ENCODE measurements at regions of chr15 and their contacts with region 1.

Region 1: GRCh38 chr15:65286704-65287519 is at the start of gene PARP16:
- DNase-seq: peak; percentile 80 to 97 (median 92)
- ATAC-seq: peak; percentile 94
- H3K4me3 ChIP-seq: peak within 1 kb of the TSS; percentile 71 to 88
- H3K4me3 Mint-ChIP-seq: peak within 1 kb of the TSS; percentile 90
- H3K27ac ChIP-seq: peak within 1 kb of the TSS; percentile 69 to 81
- H3K27ac Mint-ChIP-seq: peak within 1 kb of the TSS; percentile 86
- H3K4me1 ChIP-seq: peaks cover 27% of the 10 kb centered on the region
- H3K4me1 Mint-ChIP-seq: peaks cover 45% of the 10 kb centered on the region
- H3K27me3 ChIP-seq: no peaks in the 10 kb centered on the region
- H3K27me3 Mint-ChIP-seq: no peaks in the 10 kb centered on the region
- CTCF ChIP-seq: no peak
- total RNA-seq, gene PARP16: 9.9 to 11.5 TPM

Region 2: GRCh38 chr15:64387562-64388168 is 899.2 kb before region 1 on chr15 and contains the start of gene TRIP4:
- CTCF ChIA-PET with region 1: no interaction called
- POLR2A ChIA-PET with region 1: no interaction called
- intact Hi-C with region 1: loop called in 1 of 2 experiments (anchors 10 kb)
- DNase-seq: peak; percentile 93 to 98 (median 96)
- ATAC-seq: peak; percentile 99
- H3K4me3 ChIP-seq: peak within 1 kb of the TSS; percentile 86 to 98
- H3K4me3 Mint-ChIP-seq: peak within 1 kb of the TSS; percentile 99
- H3K27ac ChIP-seq: peak within 1 kb of the TSS; percentile 51 to 69
- H3K27ac Mint-ChIP-seq: peak within 1 kb of the TSS; percentile 97
- H3K4me1 ChIP-seq: peaks cover 19% of the 10 kb centered on the region
- H3K4me1 Mint-ChIP-seq: peaks cover 21% of the 10 kb centered on the region
- H3K27me3 ChIP-seq: no peaks in the 10 kb centered on the region
- H3K27me3 Mint-ChIP-seq: no peaks in the 10 kb centered on the region
- CTCF ChIP-seq: no peak
- total RNA-seq, gene TRIP4: 10.7 to 11.2 TPM

Region 3: GRCh38 chr15:64841258-64842095 is 445.4 kb before region 1 on chr15 and contains the start of gene PLEKHO2:
- CTCF ChIA-PET with region 1: no interaction called
- POLR2A ChIA-PET with region 1: no interaction called
- intact Hi-C with region 1: loop called in 1 of 2 experiments (anchors 5 kb)
- DNase-seq: peak; percentile 66 to 96 (median 91)
- ATAC-seq: peak; percentile 76
- H3K4me3 ChIP-seq: peak within 1 kb of the TSS; percentile 65 to 71
- H3K4me3 Mint-ChIP-seq: peak within 1 kb of the TSS; percentile 95
- H3K27ac ChIP-seq: peak within 1 kb of the TSS; percentile 57 to 79
- H3K27ac Mint-ChIP-seq: peak within 1 kb of the TSS; percentile 93
- H3K4me1 ChIP-seq: peaks cover 81% of the 10 kb centered on the region
- H3K4me1 Mint-ChIP-seq: peaks cover 82% of the 10 kb centered on the region
- H3K27me3 ChIP-seq: no peaks in the 10 kb centered on the region
- H3K27me3 Mint-ChIP-seq: no peaks in the 10 kb centered on the region
- CTCF ChIP-seq: peak; percentile 40
- total RNA-seq, gene PLEKHO2: 7.9 to 8.2 TPM

Region 4: DNA sequence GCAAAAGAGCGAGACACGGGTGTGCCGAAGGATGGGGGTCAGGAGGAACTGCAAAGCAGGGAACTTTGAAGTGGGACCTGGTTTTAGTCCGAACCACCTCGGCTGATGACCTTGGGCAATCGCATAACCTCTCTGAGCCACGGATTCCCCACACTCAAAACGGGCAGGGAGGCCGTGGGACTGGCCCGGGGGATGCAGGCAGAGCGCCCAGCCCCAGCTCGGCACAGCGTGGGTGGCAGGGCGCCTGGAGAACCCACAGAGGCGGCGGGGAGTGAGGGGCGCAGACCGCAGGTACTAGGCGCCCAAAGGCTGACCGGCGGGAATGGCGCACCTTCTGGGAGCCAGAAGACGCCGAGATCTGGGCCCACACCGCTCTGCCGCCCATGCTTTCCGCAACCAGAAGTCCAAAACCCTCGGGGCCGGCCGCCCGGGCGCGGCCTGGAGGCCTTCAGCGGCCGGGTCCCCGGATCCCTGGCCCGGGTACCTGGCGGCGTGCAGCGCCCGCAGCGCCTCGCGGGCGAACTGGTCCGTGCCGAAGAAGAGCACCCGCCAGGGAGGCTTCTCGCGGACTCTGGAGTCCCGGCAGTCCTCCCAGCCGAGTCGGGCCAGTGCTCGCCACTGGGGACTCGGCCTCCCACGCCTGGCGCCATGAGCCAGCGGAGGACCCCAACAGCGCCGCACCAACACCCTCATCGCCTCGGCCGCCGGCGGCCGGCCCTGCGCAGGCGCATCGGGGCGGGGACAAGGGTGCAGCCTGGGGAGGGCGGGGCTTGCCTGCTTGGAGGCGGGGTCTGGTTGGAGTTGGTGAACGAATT is 257.8 kb before region 1 on chr15 and contains the start of gene MTFMT:
- CTCF ChIA-PET with region 1: no interaction called
- POLR2A ChIA-PET with region 1: no interaction called
- intact Hi-C with region 1: loop called in 1 of 2 experiments (anchors 5 kb)
- DNase-seq: peak; percentile 88 to 96 (median 93)
- ATAC-seq: peak; percentile 96
- H3K4me3 ChIP-seq: peak within 1 kb of the TSS; percentile 69 to 82
- H3K4me3 Mint-ChIP-seq: peak within 1 kb of the TSS; percentile 86
- H3K27ac ChIP-seq: peak within 1 kb of the TSS; percentile 53 to 61
- H3K27ac Mint-ChIP-seq: peak within 1 kb of the TSS; percentile 68
- H3K4me1 ChIP-seq: peaks cover 14% of the 10 kb centered on the region
- H3K4me1 Mint-ChIP-seq: peaks cover 24% of the 10 kb centered on the region
- H3K27me3 ChIP-seq: no peaks in the 10 kb centered on the region
- H3K27me3 Mint-ChIP-seq: peaks cover 14% of the 10 kb centered on the region
- CTCF ChIP-seq: no peak
- total RNA-seq, gene MTFMT: 6.9 to 7.4 TPM

Region 5: GRCh38 chr15:65249641-65250040 is 37.3 kb before region 1 on chr15:
- CTCF ChIA-PET with region 1: no interaction called
- POLR2A ChIA-PET with region 1: no interaction called
- intact Hi-C with region 1: no loop called
- DNase-seq: peak in 3 of 9 experiments; percentile 11 to 54 (median 22)
- ATAC-seq: peak; percentile 70
- H3K4me3 ChIP-seq: no peak overlapping the region
- H3K4me3 Mint-ChIP-seq: no peak overlapping the region
- H3K27ac ChIP-seq: no peak overlapping the region
- H3K27ac Mint-ChIP-seq: peak overlapping the region; percentile 37
- H3K4me1 ChIP-seq: peaks cover 6% of the 10 kb centered on the region
- H3K4me1 Mint-ChIP-seq: peaks cover 10% of the 10 kb centered on the region
- H3K27me3 ChIP-seq: no peaks in the 10 kb centered on the region
- H3K27me3 Mint-ChIP-seq: no peaks in the 10 kb centered on the region
- CTCF ChIP-seq: no peak

Region 6: DNA sequence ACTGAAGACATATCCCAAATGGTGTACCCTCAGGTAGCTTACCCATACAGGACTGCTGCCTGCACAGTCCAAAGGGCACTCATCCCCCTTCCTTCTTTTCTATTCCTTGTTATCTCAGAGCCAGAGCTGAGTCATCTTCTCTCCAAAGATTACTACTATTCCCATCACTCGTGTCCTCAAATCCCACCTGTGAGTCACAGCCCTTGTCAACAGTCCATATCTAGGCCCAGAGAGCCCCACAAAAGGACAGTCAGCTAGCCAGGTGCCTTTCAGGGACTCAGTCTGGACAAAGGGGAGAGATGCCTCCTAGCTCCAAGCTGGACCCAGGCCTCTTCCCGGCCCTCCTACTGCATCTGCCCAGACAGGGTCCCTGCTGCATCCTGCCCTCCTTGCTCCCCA is 11.2 kb before region 1 on chr15:
- CTCF ChIA-PET with region 1: interaction called, 8 read pairs
- POLR2A ChIA-PET with region 1: interaction called, 14 read pairs
- intact Hi-C with region 1: no loop called
- DNase-seq: no peak
- ATAC-seq: no peak
- H3K4me3 ChIP-seq: no peak overlapping the region
- H3K4me3 Mint-ChIP-seq: no peak overlapping the region
- H3K27ac ChIP-seq: peak overlapping the region in 1 of 2 experiments; percentile 56
- H3K27ac Mint-ChIP-seq: peak overlapping the region; percentile 47
- H3K4me1 ChIP-seq: peaks cover 19% of the 10 kb centered on the region
- H3K4me1 Mint-ChIP-seq: peaks cover 53% of the 10 kb centered on the region
- H3K27me3 ChIP-seq: no peaks in the 10 kb centered on the region
- H3K27me3 Mint-ChIP-seq: no peaks in the 10 kb centered on the region
- CTCF ChIP-seq: no peak

Region 7: DNA sequence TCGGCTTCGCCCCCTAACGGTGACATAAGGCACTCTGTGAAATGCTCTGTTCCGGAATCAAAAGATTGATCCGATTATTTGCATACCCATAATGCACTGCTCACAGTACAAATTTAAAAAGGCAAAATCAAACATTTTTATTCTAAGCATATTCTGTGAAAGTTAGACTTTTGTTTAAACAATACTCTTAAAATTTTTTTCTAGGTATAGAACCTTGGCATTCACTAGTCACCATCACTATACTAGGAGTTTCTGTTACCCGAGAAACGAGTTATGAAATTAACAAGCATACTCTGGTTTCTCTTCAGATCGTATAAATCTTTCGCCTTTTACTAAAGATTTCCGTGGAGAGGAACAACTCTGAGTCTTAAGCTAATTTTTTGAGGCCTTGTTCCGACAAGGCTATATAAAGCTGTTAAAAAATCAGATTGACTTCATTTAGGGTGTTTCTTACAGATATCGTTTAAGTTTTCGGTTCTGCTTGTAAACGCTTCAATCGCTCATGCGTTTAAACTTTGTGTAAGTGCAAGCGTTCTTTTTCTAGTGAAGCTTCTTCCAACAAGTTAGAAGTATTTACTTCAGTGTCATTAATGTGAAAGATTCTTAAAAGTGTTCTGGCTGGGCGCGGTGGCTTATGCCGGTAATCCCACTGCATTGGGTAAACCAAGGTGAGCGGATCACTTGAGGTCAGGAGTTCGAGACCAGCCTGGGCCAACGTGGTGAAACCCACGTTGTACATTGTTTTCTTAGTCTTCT is 17.7 kb after region 1 on chr15 and contains the start of gene RNU5B-1:
- CTCF ChIA-PET with region 1: interaction called, 12 read pairs
- POLR2A ChIA-PET with region 1: interaction called, 50 read pairs
- intact Hi-C with region 1: loop called (anchors 1 kb)
- DNase-seq: peak; percentile 41 to 93 (median 72)
- ATAC-seq: peak; percentile 79
- H3K4me3 ChIP-seq: peak within 1 kb of the TSS; percentile 62 to 64
- H3K4me3 Mint-ChIP-seq: peak within 1 kb of the TSS; percentile 94
- H3K27ac ChIP-seq: peak within 1 kb of the TSS; percentile 90 to 98
- H3K27ac Mint-ChIP-seq: peak within 1 kb of the TSS; percentile 98
- H3K4me1 ChIP-seq: peaks cover 10% of the 10 kb centered on the region
- H3K4me1 Mint-ChIP-seq: peaks cover 41% of the 10 kb centered on the region
- H3K27me3 ChIP-seq: no peaks in the 10 kb centered on the region
- H3K27me3 Mint-ChIP-seq: no peaks in the 10 kb centered on the region
- CTCF ChIP-seq: peak; percentile 43
- total RNA-seq, gene RNU5B-1: 17.0 to 36.6 TPM

Measured in CD8-positive, alpha-beta T cell (primary cell).